ENCODE measurements at regions of chr19 and their contacts with region 1.

Region 1: DNA sequence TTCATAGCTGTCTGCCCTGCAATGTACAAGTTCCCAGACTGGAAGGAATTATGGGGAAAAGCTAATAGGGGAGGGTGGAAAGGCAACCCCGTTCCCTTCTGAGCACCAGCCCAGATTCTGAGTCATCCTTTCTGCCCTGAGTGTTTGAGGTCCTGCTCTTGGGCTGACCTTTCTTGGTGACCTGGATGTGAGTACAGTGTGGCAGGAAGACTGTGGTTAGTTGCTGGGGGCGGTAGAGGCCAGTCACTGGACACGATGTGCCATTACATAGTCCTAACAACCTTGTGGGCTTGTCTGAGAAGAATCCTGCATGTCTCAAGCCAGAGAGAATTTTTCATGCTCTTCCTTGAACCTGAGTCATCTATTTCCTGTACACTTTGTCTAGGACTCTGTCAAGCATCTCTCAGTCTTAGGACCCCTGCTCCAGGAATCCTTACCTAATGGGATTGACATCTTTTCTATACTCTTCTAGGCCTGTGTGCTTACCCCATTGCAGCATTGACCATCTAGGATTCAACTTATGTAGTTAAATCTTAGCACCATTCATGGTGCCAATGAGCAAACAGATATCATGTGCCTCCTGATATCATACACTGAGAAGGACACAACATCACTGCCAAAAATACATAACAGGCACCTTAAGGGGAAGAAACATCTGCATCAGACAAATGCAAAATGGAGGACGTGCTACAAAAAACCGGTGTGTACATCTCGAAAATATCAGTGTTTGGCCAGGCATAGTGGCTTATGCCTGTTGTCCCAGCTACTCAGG is 8.1 kb upstream of the ANGPTL4 start:
- DNase-seq: no peak
- H3K4me3 ChIP-seq: no peak overlapping the region
- H3K27ac ChIP-seq: no peak overlapping the region
- H3K4me1 ChIP-seq: peaks cover 0 to 4% (median 2%) of the 10 kb centered on the region in 4 experiments; a peak in 3 of 7 replicates
- H3K27me3 ChIP-seq: no peaks in the 10 kb centered on the region
- CTCF ChIP-seq: no peak
- EP300 ChIP-seq: no peak
- POLR2A ChIP-seq: no peak
- RAD21 ChIP-seq: no peak

Region 2: GRCh38 chr19:8174706-8175105 is 181.1 kb before region 1 on chr19:
- CTCF ChIA-PET with region 1: no interaction called
- POLR2A ChIA-PET with region 1: no interaction called
- DNase-seq: no peak
- H3K4me3 ChIP-seq: no peak overlapping the region
- H3K27ac ChIP-seq: no peak overlapping the region
- H3K4me1 ChIP-seq: no peaks in the 10 kb centered on the region
- H3K27me3 ChIP-seq: no peaks in the 10 kb centered on the region
- CTCF ChIP-seq: no peak
- EP300 ChIP-seq: no peak
- POLR2A ChIP-seq: no peak
- RAD21 ChIP-seq: no peak

Region 3: GRCh38 chr19:8224394-8225145 is 131.2 kb before region 1 on chr19:
- CTCF ChIA-PET with region 1: no interaction called
- POLR2A ChIA-PET with region 1: no interaction called
- DNase-seq: no peak
- H3K4me3 ChIP-seq: no peak overlapping the region
- H3K27ac ChIP-seq: no peak overlapping the region; the same call in 1 of the 2 replicates
- H3K4me1 ChIP-seq: no peaks in the 10 kb centered on the region
- H3K27me3 ChIP-seq: no peaks in the 10 kb centered on the region
- CTCF ChIP-seq: no peak
- EP300 ChIP-seq: no peak
- POLR2A ChIP-seq: no peak
- RAD21 ChIP-seq: no peak

Region 4: GRCh38 chr19:8257052-8257443 is 98.8 kb before region 1 on chr19:
- CTCF ChIA-PET with region 1: no interaction called
- POLR2A ChIA-PET with region 1: no interaction called
- DNase-seq: peak in 1 of 2 experiments; percentile 65
- H3K4me3 ChIP-seq: no peak overlapping the region
- H3K27ac ChIP-seq: no peak overlapping the region
- H3K4me1 ChIP-seq: peaks cover 0 to 4% (median under 1%) of the 10 kb centered on the region in 4 experiments; a peak in 2 of 7 replicates
- H3K27me3 ChIP-seq: no peaks in the 10 kb centered on the region
- CTCF ChIP-seq: no peak
- EP300 ChIP-seq: no peak
- POLR2A ChIP-seq: no peak
- RAD21 ChIP-seq: no peak

Region 5: GRCh38 chr19:8342684-8343482 is 12.9 kb before region 1 on chr19 and contains the start of gene KANK3:
- CTCF ChIA-PET with region 1: interaction called, 68 read pairs
- POLR2A ChIA-PET with region 1: interaction called, 5 read pairs
- DNase-seq: peak; percentile 95 to 99
- H3K4me3 ChIP-seq: peak within 1 kb of the TSS; percentile 50 to 71 (median 56)
- H3K27ac ChIP-seq: no peak within 1 kb of the TSS
- H3K4me1 ChIP-seq: peaks cover 0 to 9% (median 3%) of the 10 kb centered on the region in 4 experiments; a peak in 4 of 7 replicates
- H3K27me3 ChIP-seq: peaks cover 0 to 9% (median 7%) of the 10 kb centered on the region in 4 experiments; a peak in 3 of 7 replicates
- CTCF ChIP-seq: no peak
- EP300 ChIP-seq: no peak
- POLR2A ChIP-seq: no peak
- RAD21 ChIP-seq: no peak
- total RNA-seq, gene KANK3: 2.3 and 2.5 TPM in 2 replicates

Region 6: GRCh38 chr19:8389891-8390616 is 34.2 kb after region 1 on chr19 and contains the start of gene RAB11B:
- CTCF ChIA-PET with region 1: interaction called, 47 read pairs
- POLR2A ChIA-PET with region 1: interaction called, 11 read pairs
- DNase-seq: peak; percentile 98 to 99
- H3K4me3 ChIP-seq: peak within 1 kb of the TSS; percentile 79 to 99 (median 85)
- H3K27ac ChIP-seq: peak within 1 kb of the TSS; percentile 100
- H3K4me1 ChIP-seq: peaks cover 0 to 10% (median 4%) of the 10 kb centered on the region in 4 experiments; a peak in 6 of 7 replicates
- H3K27me3 ChIP-seq: no peaks in the 10 kb centered on the region
- CTCF ChIP-seq: no peak
- EP300 ChIP-seq: peak in 1 of 2 experiments; percentile 41; a peak in 1 of 3 replicates
- POLR2A ChIP-seq: peak; percentile 57 to 86
- RAD21 ChIP-seq: no peak
- total RNA-seq, gene RAB11B: 85.8 and 90.2 TPM in 2 replicates

Region 7: GRCh38 chr19:8412783-8413628 is 57.2 kb after region 1 on chr19 and contains the start of gene MARCHF2:
- CTCF ChIA-PET with region 1: interaction called, 24 read pairs
- POLR2A ChIA-PET with region 1: no interaction called
- DNase-seq: peak; percentile 96
- H3K4me3 ChIP-seq: peak within 1 kb of the TSS; percentile 65 to 83 (median 68)
- H3K27ac ChIP-seq: no peak within 1 kb of the TSS
- H3K4me1 ChIP-seq: peaks cover 0 to 3% (median under 1%) of the 10 kb centered on the region in 4 experiments; a peak in 3 of 7 replicates
- H3K27me3 ChIP-seq: no peaks in the 10 kb centered on the region
- CTCF ChIP-seq: peak; percentile 38 to 62 (median 43)
- EP300 ChIP-seq: no peak
- POLR2A ChIP-seq: no peak
- RAD21 ChIP-seq: peak in 1 of 2 experiments; percentile 52; a peak in 2 of 4 replicates
- total RNA-seq, gene MARCHF2: 18.5 and 19.7 TPM in 2 replicates

Region 8: GRCh38 chr19:8444645-8445487 is 89.0 kb after region 1 on chr19 and contains the start of gene HNRNPM:
- CTCF ChIA-PET with region 1: interaction called, 11 read pairs
- POLR2A ChIA-PET with region 1: interaction called, 4 read pairs
- DNase-seq: peak; percentile 87 to 100
- H3K4me3 ChIP-seq: peak within 1 kb of the TSS; percentile 85 to 93 (median 88)
- H3K27ac ChIP-seq: peak within 1 kb of the TSS; percentile 98
- H3K4me1 ChIP-seq: peaks cover 7 to 26% (median 17%) of the 10 kb centered on the region in 4 experiments
- H3K27me3 ChIP-seq: no peaks in the 10 kb centered on the region
- CTCF ChIP-seq: no peak
- EP300 ChIP-seq: no peak
- POLR2A ChIP-seq: peak; percentile 91 to 97
- RAD21 ChIP-seq: no peak
- total RNA-seq, gene HNRNPM: 448 and 474 TPM in 2 replicates

Region 9: GRCh38 chr19:8459520-8460259 is 103.9 kb after region 1 on chr19:
- CTCF ChIA-PET with region 1: interaction called, 11 read pairs
- POLR2A ChIA-PET with region 1: interaction called, 3 read pairs
- DNase-seq: no peak
- H3K4me3 ChIP-seq: no peak overlapping the region
- H3K27ac ChIP-seq: no peak overlapping the region
- H3K4me1 ChIP-seq: peaks cover 8 to 14% (median 12%) of the 10 kb centered on the region in 4 experiments
- H3K27me3 ChIP-seq: no peaks in the 10 kb centered on the region
- CTCF ChIP-seq: no peak
- EP300 ChIP-seq: no peak
- POLR2A ChIP-seq: no peak
- RAD21 ChIP-seq: no peak

Measured in H1 (cell line).